Activated naive CD4-positive, alpha-beta T cell treated with anti-CD3 and anti-CD28 coated beads for 36 hours (primary cell): ENCODE measurements at regions of chr19 and their contacts with region 1.

Region 1: DNA sequence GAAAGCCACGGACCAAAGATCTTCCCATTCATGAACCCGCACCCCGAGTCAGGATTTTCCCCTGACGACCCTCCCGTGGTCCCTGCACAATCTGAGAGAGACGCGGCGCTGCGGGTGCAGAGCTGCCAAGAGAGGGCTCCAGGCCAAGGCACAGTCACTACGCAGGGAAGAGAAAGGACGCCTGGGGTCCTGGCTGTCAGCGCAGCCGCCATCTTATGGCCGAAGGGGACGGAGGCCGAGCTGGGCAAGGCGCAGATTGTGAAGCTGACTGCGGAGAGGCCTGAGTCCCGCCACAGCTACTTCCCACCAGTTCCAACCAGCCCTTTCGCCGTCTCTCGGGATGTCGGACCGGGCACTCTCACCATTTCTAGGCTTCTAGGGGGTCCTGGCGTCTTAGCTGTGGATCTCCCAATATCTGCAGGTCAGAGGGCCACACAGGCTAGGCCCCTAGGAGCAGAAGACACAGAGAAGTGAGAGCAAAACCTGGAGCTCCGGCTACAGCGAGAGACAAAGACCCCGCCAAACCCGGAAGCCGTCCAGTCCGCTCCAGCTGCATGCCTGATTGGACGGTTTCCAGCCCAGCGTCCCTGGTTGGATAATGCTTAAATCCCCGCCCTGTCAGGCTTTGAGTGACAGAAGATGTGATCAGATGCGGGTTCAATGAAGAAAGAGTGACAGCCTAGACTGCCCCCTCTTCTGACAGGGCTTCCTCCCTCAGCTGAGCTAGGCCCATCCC is at the start of gene ZNF100:
- DNase-seq: peak; percentile 94
- H3K4me3 Mint-ChIP-seq: peak within 1 kb of the TSS; percentile 78
- H3K27ac Mint-ChIP-seq: peak within 1 kb of the TSS; percentile 84
- H3K4me1 Mint-ChIP-seq: peaks cover 24% of the 10 kb centered on the region
- H3K27me3 Mint-ChIP-seq: no peaks in the 10 kb centered on the region
- total RNA-seq, gene ZNF100: 19.3 to 22.7 TPM

Region 2: DNA sequence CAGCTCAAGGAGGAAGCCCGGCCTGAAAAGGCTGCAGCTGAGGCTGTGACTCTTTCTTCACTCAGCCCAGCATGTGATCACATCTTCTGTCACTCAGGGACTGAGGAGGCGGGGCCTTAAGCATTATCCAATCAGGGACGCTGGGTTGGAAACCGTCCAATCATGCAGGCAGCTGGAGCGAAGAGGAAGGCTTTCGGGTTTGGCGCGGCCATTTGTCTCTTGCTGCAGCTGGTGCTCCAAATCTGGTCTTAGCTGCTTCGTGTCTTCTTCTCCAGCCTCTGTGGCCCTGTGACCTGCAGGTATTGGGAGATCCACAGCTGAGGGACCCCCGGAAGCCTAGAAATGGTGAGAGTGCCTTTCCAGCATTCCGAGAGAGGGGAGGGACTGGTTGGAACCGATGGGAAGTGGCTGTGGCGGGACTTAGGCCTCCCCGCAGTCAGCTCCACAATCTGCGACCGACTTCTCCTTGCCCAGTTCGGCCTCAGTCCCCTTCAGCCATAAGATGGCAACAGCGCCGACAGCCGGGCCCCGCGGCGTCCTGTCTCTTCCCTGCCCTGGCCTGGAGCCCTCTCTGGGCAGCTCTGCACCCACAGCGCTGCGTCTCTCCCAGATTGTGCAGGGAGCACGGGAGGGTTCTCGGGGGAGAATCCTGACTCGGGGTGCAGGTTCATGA is 1689.3 kb before region 1 on chr19 and contains the start of gene ZNF90:
- CTCF ChIA-PET with region 1: no interaction called
- intact Hi-C with region 1: loop called (anchors 5 kb)
- DNase-seq: peak; percentile 98
- H3K4me3 Mint-ChIP-seq: peak within 1 kb of the TSS; percentile 97
- H3K27ac Mint-ChIP-seq: peak within 1 kb of the TSS; percentile 63
- H3K4me1 Mint-ChIP-seq: peaks cover 9% of the 10 kb centered on the region
- H3K27me3 Mint-ChIP-seq: no peaks in the 10 kb centered on the region
- total RNA-seq, gene ZNF90: 15.5 to 17.6 TPM

Region 3: GRCh38 chr19:20776083-20777076 is 990.9 kb before region 1 on chr19 and contains the start of gene ZNF66:
- CTCF ChIA-PET with region 1: no interaction called
- intact Hi-C with region 1: loop called (anchors 2 kb)
- DNase-seq: peak; percentile 98
- H3K4me3 Mint-ChIP-seq: peak within 1 kb of the TSS; percentile 100
- H3K27ac Mint-ChIP-seq: peak within 1 kb of the TSS; percentile 95
- H3K4me1 Mint-ChIP-seq: peaks cover 18% of the 10 kb centered on the region
- H3K27me3 Mint-ChIP-seq: no peaks in the 10 kb centered on the region
- total RNA-seq, gene ZNF66: 3.9 to 4.9 TPM

Region 4: GRCh38 chr19:21740559-21740958 is 26.7 kb before region 1 on chr19:
- CTCF ChIA-PET with region 1: no interaction called
- intact Hi-C with region 1: no loop called
- DNase-seq: no peak
- H3K4me3 Mint-ChIP-seq: no peak overlapping the region
- H3K27ac Mint-ChIP-seq: no peak overlapping the region
- H3K4me1 Mint-ChIP-seq: no peaks in the 10 kb centered on the region
- H3K27me3 Mint-ChIP-seq: no peaks in the 10 kb centered on the region

Region 5: DNA sequence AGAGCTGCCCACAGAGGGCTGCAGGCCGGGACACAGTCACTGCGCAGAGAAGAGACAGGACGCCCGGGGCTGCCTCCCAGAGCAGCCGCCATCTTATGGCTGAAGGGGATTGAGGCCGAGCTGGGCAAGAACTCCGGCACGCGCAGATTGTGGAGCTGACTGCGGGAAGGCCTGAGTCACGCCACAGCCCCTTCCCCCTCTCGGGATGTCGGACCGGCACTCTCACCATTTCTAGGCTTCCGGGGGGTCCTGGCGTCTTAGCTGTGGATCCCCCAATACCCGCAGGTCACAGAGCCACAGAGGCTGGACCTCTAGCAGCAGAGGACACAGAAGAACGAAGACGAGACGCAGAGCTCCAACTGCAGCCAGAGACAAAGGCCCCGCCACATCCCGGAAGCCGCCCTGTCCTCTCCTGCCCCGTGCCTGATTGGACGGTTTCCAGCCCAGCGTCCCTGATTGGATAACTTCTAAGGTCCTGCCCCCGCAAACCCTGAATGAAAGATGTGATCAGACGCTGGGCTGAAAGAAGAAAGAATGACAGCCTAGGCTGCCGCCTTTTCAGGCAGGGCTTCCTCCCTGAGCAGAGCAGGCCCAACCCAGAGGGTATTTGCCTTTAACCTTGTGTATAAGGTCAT is 68.7 kb after region 1 on chr19 and contains the start of gene ZNF43:
- CTCF ChIA-PET with region 1: no interaction called
- intact Hi-C with region 1: loop called (anchors 1 kb)
- DNase-seq: peak; percentile 97
- H3K4me3 Mint-ChIP-seq: peak within 1 kb of the TSS; percentile 98
- H3K27ac Mint-ChIP-seq: peak within 1 kb of the TSS; percentile 99
- H3K4me1 Mint-ChIP-seq: peaks cover 37% of the 10 kb centered on the region
- H3K27me3 Mint-ChIP-seq: no peaks in the 10 kb centered on the region
- total RNA-seq, gene ZNF43: 25.8 to 27.8 TPM

Region 6: DNA sequence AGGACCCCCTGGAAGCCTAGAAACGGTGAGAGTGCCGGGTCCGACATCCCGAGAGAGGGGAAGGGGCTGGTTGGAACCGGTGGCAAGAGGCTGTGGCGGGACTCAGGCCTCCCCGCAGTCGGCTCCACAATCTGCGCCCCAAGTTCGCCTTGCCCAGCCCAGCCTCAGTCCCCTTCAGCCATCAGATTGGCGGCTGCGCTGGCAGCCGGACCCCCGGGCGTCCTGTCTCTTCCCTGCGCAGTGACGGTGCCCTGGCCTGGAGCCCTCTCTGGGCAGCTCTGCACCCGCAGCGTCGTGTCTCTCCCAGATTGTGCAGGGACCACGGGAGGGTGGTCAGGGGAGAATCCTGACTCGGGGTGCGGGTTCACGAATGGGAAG is 867.2 kb after region 1 on chr19:
- CTCF ChIA-PET with region 1: no interaction called
- intact Hi-C with region 1: loop called (anchors 5 kb)
- DNase-seq: peak; percentile 7
- H3K4me3 Mint-ChIP-seq: peak overlapping the region; percentile 94
- H3K27ac Mint-ChIP-seq: peak overlapping the region; percentile 87
- H3K4me1 Mint-ChIP-seq: peaks cover 8% of the 10 kb centered on the region
- H3K27me3 Mint-ChIP-seq: no peaks in the 10 kb centered on the region